A549 (cell line): ENCODE measurements at regions of chr12 and their contacts with region 1.

Region 1: DNA sequence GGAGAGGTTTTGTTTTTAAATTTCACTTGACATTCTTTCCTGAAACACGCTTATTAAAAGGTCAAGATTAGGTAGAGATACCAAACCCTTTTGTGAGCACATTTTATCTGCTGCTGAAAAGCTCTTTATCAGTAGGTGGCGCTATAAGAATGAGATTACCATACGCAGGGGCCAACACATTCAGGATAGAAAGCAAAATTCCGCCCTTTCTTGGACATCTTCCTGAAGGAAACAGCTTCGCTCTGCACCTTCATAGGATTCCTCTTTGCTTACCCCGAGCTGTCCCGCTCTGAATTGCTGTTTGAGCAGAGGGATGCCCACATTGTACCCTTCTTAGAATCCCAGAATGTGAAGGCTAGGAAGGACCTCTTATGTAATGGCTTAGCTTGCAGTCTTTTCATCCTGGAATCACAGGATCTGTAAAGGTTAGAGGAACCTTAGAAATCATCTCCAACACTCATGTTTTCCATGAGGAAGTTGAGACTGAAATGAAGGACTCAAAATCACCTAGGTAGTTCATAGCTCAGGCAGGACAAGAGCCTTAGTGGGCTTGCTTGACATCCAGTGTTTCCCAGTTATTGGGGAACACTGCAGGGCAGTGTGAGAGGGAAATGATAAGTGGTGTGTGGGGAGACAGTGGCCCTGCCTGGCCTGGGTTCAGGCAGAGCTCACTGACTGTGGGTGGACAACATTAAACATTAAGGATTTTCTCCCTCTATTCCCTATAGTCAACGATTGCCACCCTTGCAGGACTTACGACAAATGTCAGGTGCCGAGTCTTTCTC is 38.7 kb upstream of the CRY1 start:
- DNase-seq: peak; percentile 72 to 76
- ATAC-seq: peak; percentile 75 to 91
- H3K4me3 ChIP-seq: no peak overlapping the region
- H3K27ac ChIP-seq: peak overlapping the region; percentile 55 to 62; a peak in 5 of 6 replicates
- H3K4me1 ChIP-seq: 0 out of 3 replicates have a peak, but pooled peaks cover 4% of the 10 kb centered on the region
- CTCF ChIP-seq: peak; percentile 97
- EP300 ChIP-seq: no peak
- POLR2A ChIP-seq: no peak
- RAD21 ChIP-seq: peak; percentile 97 to 99

Region 2: GRCh38 chr12:107093417-107094182 is 38.4 kb before region 1 on chr12 and contains the start of gene CRY1:
- CTCF ChIA-PET with region 1: interaction called, 10 read pairs
- POLR2A ChIA-PET with region 1: no interaction called
- DNase-seq: peak; percentile 79 to 98
- ATAC-seq: peak; percentile 84 to 88
- H3K4me3 ChIP-seq: peak within 1 kb of the TSS; percentile 73
- H3K27ac ChIP-seq: peak within 1 kb of the TSS; percentile 74 to 89
- H3K4me1 ChIP-seq: peaks cover 17% of the 10 kb centered on the region
- CTCF ChIP-seq: no peak
- EP300 ChIP-seq: no peak
- POLR2A ChIP-seq: peak; percentile 59
- RAD21 ChIP-seq: no peak
- polyA plus RNA-seq, gene CRY1: 17.6 and 26.1 TPM in 2 replicates

Region 3: DNA sequence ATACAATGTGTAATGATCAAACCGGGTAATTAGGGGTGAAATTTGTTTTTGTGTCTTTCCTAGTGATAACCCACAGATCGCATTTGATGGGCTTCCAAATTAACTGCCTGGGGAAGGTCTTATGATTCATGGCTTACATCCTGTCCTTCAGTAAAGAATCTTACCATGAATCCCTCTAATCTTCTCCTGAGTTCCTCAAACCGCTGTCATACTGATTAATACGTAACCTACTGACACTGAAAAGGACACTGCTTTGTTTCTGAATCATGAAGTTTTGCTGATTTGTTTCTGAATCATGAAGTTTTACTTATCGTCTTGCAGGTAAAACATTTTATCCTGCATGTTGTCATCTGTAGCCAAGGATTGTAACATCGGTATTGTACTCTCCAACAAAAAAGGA is 13.4 kb after region 1 on chr12:
- CTCF ChIA-PET with region 1: interaction called, 50 read pairs
- POLR2A ChIA-PET with region 1: no interaction called
- DNase-seq: peak in 1 of 2 experiments; percentile 24
- ATAC-seq: peak in 1 of 2 experiments; percentile 61; a peak in 2 of 6 replicates
- H3K4me3 ChIP-seq: no peak overlapping the region
- H3K27ac ChIP-seq: no peak overlapping the region
- H3K4me1 ChIP-seq: peaks cover 14% of the 10 kb centered on the region
- CTCF ChIP-seq: no peak
- EP300 ChIP-seq: no peak
- POLR2A ChIP-seq: no peak
- RAD21 ChIP-seq: no peak

Region 4: GRCh38 chr12:107236824-107237511 is 104.9 kb after region 1 on chr12:
- CTCF ChIA-PET with region 1: interaction called, 11 read pairs
- POLR2A ChIA-PET with region 1: no interaction called
- DNase-seq: no peak
- ATAC-seq: no peak
- H3K4me3 ChIP-seq: no peak overlapping the region
- H3K27ac ChIP-seq: no peak overlapping the region
- H3K4me1 ChIP-seq: peaks cover 8% of the 10 kb centered on the region
- CTCF ChIP-seq: no peak
- EP300 ChIP-seq: no peak
- POLR2A ChIP-seq: no peak
- RAD21 ChIP-seq: no peak

Region 5: GRCh38 chr12:107311682-107312081 is 179.7 kb after region 1 on chr12:
- CTCF ChIA-PET with region 1: interaction called, 128 read pairs
- POLR2A ChIA-PET with region 1: no interaction called
- DNase-seq: no peak
- ATAC-seq: no peak
- H3K4me3 ChIP-seq: no peak overlapping the region
- H3K27ac ChIP-seq: no peak overlapping the region
- H3K4me1 ChIP-seq: no peaks in the 10 kb centered on the region
- CTCF ChIP-seq: no peak
- EP300 ChIP-seq: no peak
- POLR2A ChIP-seq: no peak
- RAD21 ChIP-seq: no peak

Region 6: GRCh38 chr12:107402041-107403022 is 270.3 kb after region 1 on chr12:
- CTCF ChIA-PET with region 1: interaction called, 217 read pairs
- POLR2A ChIA-PET with region 1: no interaction called
- DNase-seq: peak; percentile 47 to 85
- ATAC-seq: peak; percentile 69 to 82; a peak in 5 of 6 replicates
- H3K4me3 ChIP-seq: no peak overlapping the region
- H3K27ac ChIP-seq: peak overlapping the region; percentile 61 to 82
- H3K4me1 ChIP-seq: peaks cover 61% of the 10 kb centered on the region
- CTCF ChIP-seq: peak; percentile 74
- EP300 ChIP-seq: no peak
- POLR2A ChIP-seq: no peak
- RAD21 ChIP-seq: peak; percentile 88 to 89

Region 7: DNA sequence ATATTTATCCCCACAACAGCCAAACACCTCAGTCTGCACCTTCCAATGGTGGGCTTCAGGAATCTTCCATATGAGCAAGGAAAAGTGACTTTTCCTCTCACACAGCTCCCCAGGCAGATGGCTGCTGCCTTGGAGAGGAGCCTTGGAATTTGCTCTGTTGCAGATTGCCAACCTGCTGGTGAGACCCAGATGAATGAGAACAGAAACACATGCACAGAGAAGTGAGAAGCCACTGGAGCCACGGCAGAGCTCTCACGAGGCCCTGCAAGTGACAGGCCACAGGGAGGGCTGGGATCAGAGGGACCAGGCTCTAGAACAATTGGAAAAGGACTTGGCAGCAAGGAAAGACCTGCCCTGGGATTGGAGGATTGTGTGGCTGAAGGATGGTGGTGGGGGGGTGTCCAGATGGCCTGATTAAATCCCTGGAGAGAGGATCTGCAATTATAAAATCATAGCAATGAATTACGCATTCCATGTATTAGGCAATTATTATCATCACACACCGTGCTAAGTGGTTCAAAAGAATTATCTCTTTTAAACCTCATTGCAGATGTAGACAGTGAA is 468.6 kb after region 1 on chr12:
- CTCF ChIA-PET with region 1: interaction called, 419 read pairs
- POLR2A ChIA-PET with region 1: no interaction called
- DNase-seq: no peak
- ATAC-seq: no peak
- H3K4me3 ChIP-seq: no peak overlapping the region
- H3K27ac ChIP-seq: no peak overlapping the region
- H3K4me1 ChIP-seq: no peaks in the 10 kb centered on the region
- CTCF ChIP-seq: no peak
- EP300 ChIP-seq: no peak
- POLR2A ChIP-seq: no peak
- RAD21 ChIP-seq: no peak